Naive thymus-derived CD4-positive, alpha-beta T cell (primary cell): ENCODE measurements at regions of chr1 and their contacts with region 1.

Region 1: GRCh38 chr1:162069328-162070093 is at the start of gene NOS1AP:
- DNase-seq: peak; percentile 50 to 87 (median 71)
- ATAC-seq: peak; percentile 99
- H3K4me3 ChIP-seq: peak within 1 kb of the TSS; percentile 56
- H3K4me3 Mint-ChIP-seq: peak within 1 kb of the TSS; percentile 79 to 90 (median 84)
- H3K27ac ChIP-seq: no peak within 1 kb of the TSS
- H3K27ac Mint-ChIP-seq: peak within 1 kb of the TSS in 1 of 9 donors; percentile 31
- H3K4me1 ChIP-seq: peaks cover 0 to 5% of the 10 kb centered on the region in 2 donors
- H3K4me1 Mint-ChIP-seq: peaks cover 0 to 12% (median 5%) of the 10 kb centered on the region in 7 donors
- H3K27me3 ChIP-seq: peaks cover 0 to 3% of the 10 kb centered on the region in 2 donors
- H3K27me3 Mint-ChIP-seq: peaks cover 51 to 79% (median 68%) of the 10 kb centered on the region in 5 donors
- total RNA-seq, gene NOS1AP: 0.08 to 0.15 TPM in 2 of 5 experiments, not detected in the others

Region 2: GRCh38 chr1:162240568-162240967 is 171.1 kb after region 1 on chr1:
- CTCF ChIA-PET with region 1: no interaction called
- POLR2A ChIA-PET with region 1: no interaction called
- intact Hi-C with region 1: no loop called
- DNase-seq: no peak
- ATAC-seq: no peak
- H3K4me3 ChIP-seq: no peak overlapping the region
- H3K4me3 Mint-ChIP-seq: no peak overlapping the region
- H3K27ac ChIP-seq: no peak overlapping the region
- H3K27ac Mint-ChIP-seq: no peak overlapping the region
- H3K4me1 ChIP-seq: no peaks in the 10 kb centered on the region
- H3K4me1 Mint-ChIP-seq: no peaks in the 10 kb centered on the region
- H3K27me3 ChIP-seq: no peaks in the 10 kb centered on the region
- H3K27me3 Mint-ChIP-seq: peaks cover 2 to 57% (median 33%) of the 10 kb centered on the region in 5 donors

Region 3: DNA sequence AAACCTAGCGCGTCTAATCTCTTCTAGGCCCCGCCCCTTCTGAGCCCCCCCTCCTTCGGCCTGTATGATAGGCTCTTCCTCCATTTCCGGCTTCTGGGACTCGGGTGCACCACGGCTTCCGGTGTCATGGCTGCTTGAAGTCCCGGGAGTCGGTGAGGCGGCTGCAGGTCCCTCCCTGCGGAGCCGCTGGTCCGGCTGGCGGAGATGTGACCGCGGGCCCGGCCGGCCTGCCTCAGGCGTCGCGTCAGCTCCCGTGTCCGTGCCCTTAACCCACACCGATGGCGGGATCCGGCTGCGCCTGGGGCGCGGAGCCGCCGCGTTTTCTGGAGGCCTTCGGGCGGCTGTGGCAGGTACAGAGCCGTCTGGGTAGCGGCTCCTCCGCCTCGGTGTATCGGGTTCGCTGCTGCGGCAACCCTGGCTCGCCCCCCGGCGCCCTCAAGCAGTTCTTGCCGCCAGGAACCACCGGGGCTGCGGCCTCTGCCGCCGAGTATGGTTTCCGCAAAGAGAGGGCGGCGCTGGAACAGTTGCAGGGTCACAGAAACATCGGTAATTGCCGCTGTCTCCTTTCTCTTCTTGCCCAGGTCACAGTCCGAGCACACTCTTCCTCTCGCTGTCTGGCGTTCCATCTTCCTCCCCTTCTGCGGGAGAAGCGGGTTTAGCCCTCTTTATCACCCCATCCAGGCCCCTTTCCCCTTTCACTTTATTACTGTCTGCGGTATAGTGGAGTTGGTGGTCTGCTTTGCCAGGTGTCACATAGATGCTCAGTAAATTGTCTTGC is 428.4 kb after region 1 on chr1 and contains the start of gene UHMK1:
- CTCF ChIA-PET with region 1: no interaction called
- POLR2A ChIA-PET with region 1: no interaction called
- intact Hi-C with region 1: loop called in 1 of 2 experiments (anchors 2 kb)
- DNase-seq: peak; percentile 66 to 93 (median 90)
- ATAC-seq: peak; percentile 99
- H3K4me3 ChIP-seq: peak within 1 kb of the TSS; percentile 81
- H3K4me3 Mint-ChIP-seq: peak within 1 kb of the TSS; percentile 83 to 99 (median 92)
- H3K27ac ChIP-seq: peak within 1 kb of the TSS; percentile 90
- H3K27ac Mint-ChIP-seq: peak within 1 kb of the TSS; percentile 88 to 98 (median 94)
- H3K4me1 ChIP-seq: peaks cover 17 to 19% of the 10 kb centered on the region in 2 donors
- H3K4me1 Mint-ChIP-seq: peaks cover 22 to 55% (median 45%) of the 10 kb centered on the region in 7 donors
- H3K27me3 ChIP-seq: no peaks in the 10 kb centered on the region
- H3K27me3 Mint-ChIP-seq: peaks cover 0 to 5% (median 0%) of the 10 kb centered on the region in 5 donors
- total RNA-seq, gene UHMK1: 47.1 to 69.9 (median 66.6) TPM

Region 4: DNA sequence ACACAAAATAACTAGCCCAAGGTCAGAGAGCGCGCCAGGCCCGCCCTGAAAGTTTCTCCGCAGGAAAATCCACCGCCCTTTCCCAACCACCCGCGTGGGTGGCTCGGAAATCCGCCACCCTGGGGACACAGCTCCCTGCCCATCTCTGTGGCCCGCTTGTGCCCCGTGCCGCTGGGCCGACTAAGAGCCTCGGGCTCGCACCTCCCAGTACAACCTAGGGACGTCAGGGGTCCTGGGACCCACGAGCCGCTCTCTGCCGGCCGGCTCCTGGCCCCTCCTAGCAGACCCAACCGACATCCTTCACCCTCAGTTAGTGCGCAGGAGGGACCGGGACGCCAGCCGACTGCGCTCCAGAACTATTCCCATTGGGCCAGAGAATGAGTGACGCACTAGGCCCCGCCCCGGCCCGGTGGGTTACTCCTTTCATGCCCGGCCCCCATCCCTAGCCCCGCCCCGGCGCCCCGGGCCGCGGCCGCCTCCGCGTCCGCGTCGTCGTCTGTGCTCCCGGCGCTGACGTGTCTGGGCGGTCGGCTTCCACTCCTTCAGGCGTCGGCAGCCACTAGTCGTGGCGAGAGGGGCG is 491.6 kb after region 1 on chr1:
- CTCF ChIA-PET with region 1: no interaction called
- POLR2A ChIA-PET with region 1: no interaction called
- intact Hi-C with region 1: loop called in 1 of 2 experiments (anchors 2 kb)
- DNase-seq: peak; percentile 97 to 99 (median 97)
- ATAC-seq: peak; percentile 97
- H3K4me3 ChIP-seq: peak overlapping the region; percentile 91
- H3K4me3 Mint-ChIP-seq: peak overlapping the region; percentile 89 to 98 (median 96)
- H3K27ac ChIP-seq: peak overlapping the region; percentile 91
- H3K27ac Mint-ChIP-seq: peak overlapping the region; percentile 95 to 99 (median 97)
- H3K4me1 ChIP-seq: peaks cover 10% of the 10 kb centered on the region in 2 donors
- H3K4me1 Mint-ChIP-seq: peaks cover 16 to 51% (median 44%) of the 10 kb centered on the region in 7 donors
- H3K27me3 ChIP-seq: no peaks in the 10 kb centered on the region
- H3K27me3 Mint-ChIP-seq: no peaks in the 10 kb centered on the region